Activated CD8-positive, alpha-beta T cell treated with anti-CD3 and anti-CD28 coated beads, Interleukin-2, amount 10 ng/mL, durations not matched to agents 7 days and 5 days (primary cell): ENCODE measurements at regions of chr12 and their contacts with region 1.

Region 1: DNA sequence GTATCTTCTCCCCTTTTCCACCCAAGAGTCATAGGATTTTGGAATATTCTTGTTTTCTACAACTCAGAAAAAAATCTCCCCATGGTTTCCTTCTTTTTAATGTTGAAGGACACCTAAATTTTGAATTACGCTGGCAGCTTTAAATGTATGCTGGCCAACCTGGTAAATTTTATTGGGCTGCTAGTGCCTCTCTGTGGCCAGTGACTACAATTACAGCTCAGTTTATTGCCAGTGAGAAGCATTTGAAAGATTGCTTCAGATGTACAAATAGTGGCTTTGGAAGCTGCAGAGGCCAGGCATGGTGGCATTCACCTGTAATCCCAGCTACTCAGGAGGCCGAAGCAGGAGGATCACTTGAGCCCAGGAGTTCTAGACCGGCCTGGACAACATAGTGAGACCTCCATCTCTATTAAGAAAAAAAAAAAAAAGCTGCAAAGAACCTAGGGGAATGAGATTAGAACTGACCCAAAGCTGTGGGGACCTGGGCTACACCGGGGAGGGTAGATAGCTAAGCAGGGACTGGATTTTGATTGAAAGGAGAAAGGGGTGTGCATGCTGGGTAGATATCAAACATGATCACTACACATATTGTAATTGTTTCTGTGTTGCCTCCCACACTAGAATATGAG is 7.6 kb upstream of the RAB21 start:
- DNase-seq: peak; percentile 60
- ATAC-seq: peak; percentile 77
- H3K4me3 Mint-ChIP-seq: no peak overlapping the region
- H3K27ac Mint-ChIP-seq: no peak overlapping the region
- H3K4me1 Mint-ChIP-seq: no peaks in the 10 kb centered on the region
- H3K27me3 Mint-ChIP-seq: peaks cover 37% of the 10 kb centered on the region

Region 2: GRCh38 chr12:71415336-71416231 is 331.5 kb before region 1 on chr12:
- CTCF ChIA-PET with region 1: interaction called, 75 read pairs
- POLR2A ChIA-PET with region 1: no interaction called
- DNase-seq: peak; percentile 36
- ATAC-seq: peak; percentile 61
- H3K4me3 Mint-ChIP-seq: no peak overlapping the region
- H3K27ac Mint-ChIP-seq: no peak overlapping the region
- H3K4me1 Mint-ChIP-seq: no peaks in the 10 kb centered on the region
- H3K27me3 Mint-ChIP-seq: peaks cover 7% of the 10 kb centered on the region

Region 3: GRCh38 chr12:71626098-71626497 is 121.0 kb before region 1 on chr12:
- CTCF ChIA-PET with region 1: interaction called, 14 read pairs
- POLR2A ChIA-PET with region 1: no interaction called
- DNase-seq: no peak
- ATAC-seq: no peak
- H3K4me3 Mint-ChIP-seq: peak overlapping the region; percentile 7
- H3K27ac Mint-ChIP-seq: peak overlapping the region; percentile 56
- H3K4me1 Mint-ChIP-seq: peaks cover 13% of the 10 kb centered on the region
- H3K27me3 Mint-ChIP-seq: no peaks in the 10 kb centered on the region

Region 4: DNA sequence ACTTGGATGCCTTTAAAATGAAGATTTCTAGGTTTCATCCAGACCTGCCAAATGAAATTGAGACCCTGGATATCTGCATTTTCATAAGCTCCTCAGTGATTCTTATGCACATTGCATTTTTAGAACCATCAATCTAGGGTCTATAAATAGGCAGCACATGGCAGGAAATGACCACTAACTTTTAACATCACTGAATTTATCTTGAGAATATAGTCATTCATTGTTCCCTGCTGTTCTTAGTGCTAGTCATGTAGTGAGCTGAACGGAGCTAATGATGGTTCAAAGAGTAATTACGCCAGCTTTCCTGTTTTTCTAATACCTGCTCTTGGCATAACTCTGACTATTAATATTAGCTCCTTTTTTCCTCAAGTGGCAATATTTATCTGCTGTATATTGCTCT is 283.2 kb after region 1 on chr12:
- CTCF ChIA-PET with region 1: no interaction called
- POLR2A ChIA-PET with region 1: no interaction called
- DNase-seq: no peak
- ATAC-seq: no peak
- H3K4me3 Mint-ChIP-seq: no peak overlapping the region
- H3K27ac Mint-ChIP-seq: no peak overlapping the region
- H3K4me1 Mint-ChIP-seq: no peaks in the 10 kb centered on the region
- H3K27me3 Mint-ChIP-seq: peaks cover 8% of the 10 kb centered on the region